A673 (cell line): ENCODE measurements at regions of chr4 and their contacts with region 1.

Region 1: GRCh38 chr4:146916479-146917076 is 29.1 kb downstream of the TTC29 start:
- DNase-seq: peak; percentile 72
- H3K4me3 ChIP-seq: no peak overlapping the region
- H3K27ac ChIP-seq: no peak overlapping the region
- H3K4me1 ChIP-seq: peaks cover 22% of the 10 kb centered on the region
- H3K27me3 ChIP-seq: no peaks in the 10 kb centered on the region
- CTCF ChIP-seq: peak; percentile 91

Region 2: DNA sequence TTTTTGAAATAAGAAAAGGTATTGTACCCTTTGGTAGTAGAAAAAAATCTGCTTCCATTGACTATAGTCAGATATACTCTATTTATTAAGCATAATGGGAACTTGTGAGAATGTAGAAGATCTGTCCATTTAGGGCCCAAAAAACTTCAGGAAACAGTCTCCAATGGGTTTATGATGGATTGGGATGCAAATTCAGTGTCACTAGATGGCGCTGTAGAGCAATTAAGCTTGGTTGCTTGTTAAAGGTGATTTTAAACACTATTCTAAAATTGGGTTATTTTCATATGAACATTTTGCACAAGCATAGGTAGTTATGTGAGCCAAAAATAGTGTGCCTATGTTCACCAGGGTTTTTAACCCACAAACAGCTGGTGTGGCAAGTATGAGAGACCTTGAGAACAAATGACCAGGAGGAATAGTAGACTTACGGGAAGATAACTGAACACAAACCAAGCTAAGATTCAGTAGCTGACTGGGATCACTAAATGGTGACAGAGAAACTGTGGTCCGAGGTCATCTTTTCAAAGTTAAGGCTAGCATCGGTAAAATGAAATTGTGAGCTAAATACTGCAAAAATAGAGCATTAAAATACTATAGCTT is 821.4 kb before region 1 on chr4:
- CTCF ChIA-PET with region 1: no interaction called
- POLR2A ChIA-PET with region 1: no interaction called
- intact Hi-C with region 1: loop called (anchors 5 kb)
- DNase-seq: peak; percentile 68
- H3K4me3 ChIP-seq: no peak overlapping the region
- H3K27ac ChIP-seq: no peak overlapping the region
- H3K4me1 ChIP-seq: no peaks in the 10 kb centered on the region
- H3K27me3 ChIP-seq: no peaks in the 10 kb centered on the region
- CTCF ChIP-seq: peak; percentile 88

Region 3: GRCh38 chr4:146486565-146486964 is 430.0 kb before region 1 on chr4:
- CTCF ChIA-PET with region 1: no interaction called
- POLR2A ChIA-PET with region 1: no interaction called
- intact Hi-C with region 1: loop called (anchors 2 kb)
- DNase-seq: no peak
- H3K4me3 ChIP-seq: no peak overlapping the region
- H3K27ac ChIP-seq: peak overlapping the region; percentile 98
- H3K4me1 ChIP-seq: peaks cover 58% of the 10 kb centered on the region
- H3K27me3 ChIP-seq: no peaks in the 10 kb centered on the region
- CTCF ChIP-seq: no peak

Region 4: DNA sequence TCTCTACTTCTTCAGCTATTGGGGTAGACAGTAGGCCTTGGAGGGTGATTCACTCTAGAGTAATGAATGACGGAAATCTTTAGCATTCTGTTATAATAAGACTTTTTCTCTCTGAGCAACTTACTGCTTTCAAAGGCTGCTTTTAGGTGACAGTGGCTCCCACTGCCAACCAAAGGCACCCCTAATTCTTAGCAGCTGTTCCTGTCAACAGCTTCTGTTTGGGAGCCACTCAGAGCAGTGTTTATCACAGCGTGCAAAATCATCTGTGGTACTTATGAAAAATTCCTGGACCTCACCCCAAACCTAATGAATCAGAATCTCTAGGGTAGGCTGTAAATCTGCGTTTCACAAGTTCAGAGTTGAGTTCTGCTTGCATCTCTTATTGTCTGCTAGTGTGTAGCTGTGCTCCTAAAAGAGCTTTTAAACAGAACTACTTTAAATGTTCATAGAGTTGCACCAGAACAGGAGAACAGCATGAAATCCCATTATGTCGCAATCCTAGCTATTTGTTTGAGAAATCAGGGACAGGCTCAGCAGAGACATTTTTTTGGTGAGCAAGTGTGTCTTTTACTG is 330.7 kb before region 1 on chr4:
- CTCF ChIA-PET with region 1: no interaction called
- POLR2A ChIA-PET with region 1: no interaction called
- intact Hi-C with region 1: loop called (anchors 1 kb)
- DNase-seq: peak; percentile 92
- H3K4me3 ChIP-seq: no peak overlapping the region
- H3K27ac ChIP-seq: peak overlapping the region; percentile 71
- H3K4me1 ChIP-seq: peaks cover 30% of the 10 kb centered on the region
- H3K27me3 ChIP-seq: no peaks in the 10 kb centered on the region
- CTCF ChIP-seq: no peak

Region 5: GRCh38 chr4:147096667-147097604 is 180.4 kb after region 1 on chr4:
- CTCF ChIA-PET with region 1: no interaction called
- POLR2A ChIA-PET with region 1: no interaction called
- intact Hi-C with region 1: loop called (anchors 5 kb)
- DNase-seq: peak; percentile 71
- H3K4me3 ChIP-seq: no peak overlapping the region
- H3K27ac ChIP-seq: no peak overlapping the region
- H3K4me1 ChIP-seq: no peaks in the 10 kb centered on the region
- H3K27me3 ChIP-seq: no peaks in the 10 kb centered on the region
- CTCF ChIP-seq: peak; percentile 72

Region 6: DNA sequence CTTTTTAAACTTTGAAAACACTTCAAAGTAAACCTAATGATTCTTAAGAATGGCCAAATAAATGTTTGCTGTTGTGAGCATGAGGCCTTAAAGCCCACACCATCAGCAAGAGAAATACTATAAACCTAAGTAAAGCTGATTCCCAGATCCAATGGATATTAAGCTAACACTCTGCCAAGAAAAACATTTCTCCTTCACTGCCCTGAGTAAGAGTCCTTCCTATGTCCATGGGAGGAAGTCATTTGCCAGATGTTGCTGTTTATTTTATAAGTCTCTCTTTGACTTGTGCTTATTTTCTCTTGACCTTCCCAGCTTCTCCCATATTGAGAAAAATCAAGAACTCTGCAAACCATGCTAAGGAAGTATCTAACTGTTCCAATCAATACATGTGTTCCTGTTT is 410.0 kb after region 1 on chr4:
- CTCF ChIA-PET with region 1: no interaction called
- POLR2A ChIA-PET with region 1: no interaction called
- intact Hi-C with region 1: no loop called
- DNase-seq: no peak
- H3K4me3 ChIP-seq: no peak overlapping the region
- H3K27ac ChIP-seq: no peak overlapping the region
- H3K4me1 ChIP-seq: peaks cover 4% of the 10 kb centered on the region
- H3K27me3 ChIP-seq: no peaks in the 10 kb centered on the region
- CTCF ChIP-seq: no peak